IMR-90 (cell line): ENCODE measurements at regions of chr3 and their contacts with region 1.

Region 1: GRCh38 chr3:173045770-173046382 is 95.2 kb downstream of the SPATA16 start:
- DNase-seq: no peak
- ATAC-seq: no peak
- H3K4me3 ChIP-seq: no peak overlapping the region
- H3K27ac ChIP-seq: no peak overlapping the region
- H3K4me1 ChIP-seq: no peaks in the 10 kb centered on the region
- H3K27me3 ChIP-seq: no peaks in the 10 kb centered on the region
- CTCF ChIP-seq: peak; percentile 43
- POLR2A ChIP-seq: no peak
- RAD21 ChIP-seq: no peak

Region 2: DNA sequence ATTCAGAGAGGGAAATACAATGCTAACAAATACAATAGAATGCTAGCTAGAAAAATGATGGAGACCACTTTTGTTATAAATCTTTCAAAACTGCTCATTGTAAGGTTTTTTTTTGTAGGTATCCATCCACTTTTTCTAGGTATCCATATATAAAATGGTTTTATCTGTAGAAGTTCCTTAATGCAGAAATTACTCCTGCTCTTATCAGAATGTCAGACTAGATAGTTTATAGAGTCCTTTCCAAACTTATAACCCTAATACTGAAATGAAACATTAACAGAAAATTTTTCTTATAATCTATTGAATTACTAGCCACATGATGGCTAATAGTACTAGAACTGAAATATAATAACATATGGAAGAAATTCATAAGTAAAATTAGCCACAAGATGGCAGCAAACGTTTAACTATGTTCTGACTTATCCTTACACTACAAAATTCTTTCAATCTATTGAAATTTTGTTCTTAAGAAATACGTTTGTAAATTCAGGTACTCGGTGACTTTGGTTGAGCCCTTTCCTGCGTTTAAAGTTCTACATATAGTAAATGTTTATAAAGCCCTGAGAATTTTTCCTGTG is 236.8 kb before region 1 on chr3:
- CTCF ChIA-PET with region 1: no interaction called
- POLR2A ChIA-PET with region 1: no interaction called
- dilution Hi-C with region 1: no loop called
- in situ Hi-C with region 1: no loop called
- intact Hi-C with region 1: loop called (anchors 2 kb)
- DNase-seq: peak; percentile 61
- ATAC-seq: peak; percentile 64; the same call in 1 of the 2 replicates
- H3K4me3 ChIP-seq: no peak overlapping the region
- H3K27ac ChIP-seq: no peak overlapping the region
- H3K4me1 ChIP-seq: no peaks in the 10 kb centered on the region
- H3K27me3 ChIP-seq: no peaks in the 10 kb centered on the region
- CTCF ChIP-seq: peak; percentile 52
- POLR2A ChIP-seq: no peak
- RAD21 ChIP-seq: peak; percentile 49; the same call in 1 of the 2 replicates

Region 3: GRCh38 chr3:172836390-172836997 is 209.4 kb before region 1 on chr3:
- CTCF ChIA-PET with region 1: interaction called, 3 read pairs
- POLR2A ChIA-PET with region 1: no interaction called
- dilution Hi-C with region 1: no loop called
- in situ Hi-C with region 1: loop called (anchors 10 kb)
- intact Hi-C with region 1: loop called (anchors 1 kb)
- DNase-seq: peak; percentile 34
- ATAC-seq: peak; percentile 82
- H3K4me3 ChIP-seq: no peak overlapping the region
- H3K27ac ChIP-seq: no peak overlapping the region
- H3K4me1 ChIP-seq: no peaks in the 10 kb centered on the region
- H3K27me3 ChIP-seq: peaks cover 8% of the 10 kb centered on the region
- CTCF ChIP-seq: peak; percentile 54
- POLR2A ChIP-seq: no peak
- RAD21 ChIP-seq: peak; percentile 47